ENCODE measurements at regions of chr18 and their contacts with region 1.

Region 1: GRCh38 chr18:74331404-74331803 is 15.8 kb downstream of the C18orf63 start:
- DNase-seq: no peak
- ATAC-seq: peak in 4 of 8 donors; percentile 25 to 70 (median 46)
- H3K4me3 ChIP-seq: no peak overlapping the region
- H3K27ac ChIP-seq: no peak overlapping the region
- H3K4me1 ChIP-seq: peaks cover 0 to 5% (median 0%) of the 10 kb centered on the region in 9 donors
- H3K27me3 ChIP-seq: no peaks in the 10 kb centered on the region
- CTCF ChIP-seq: peak in 8 of 9 donors; percentile 9 to 57 (median 42)

Region 2: DNA sequence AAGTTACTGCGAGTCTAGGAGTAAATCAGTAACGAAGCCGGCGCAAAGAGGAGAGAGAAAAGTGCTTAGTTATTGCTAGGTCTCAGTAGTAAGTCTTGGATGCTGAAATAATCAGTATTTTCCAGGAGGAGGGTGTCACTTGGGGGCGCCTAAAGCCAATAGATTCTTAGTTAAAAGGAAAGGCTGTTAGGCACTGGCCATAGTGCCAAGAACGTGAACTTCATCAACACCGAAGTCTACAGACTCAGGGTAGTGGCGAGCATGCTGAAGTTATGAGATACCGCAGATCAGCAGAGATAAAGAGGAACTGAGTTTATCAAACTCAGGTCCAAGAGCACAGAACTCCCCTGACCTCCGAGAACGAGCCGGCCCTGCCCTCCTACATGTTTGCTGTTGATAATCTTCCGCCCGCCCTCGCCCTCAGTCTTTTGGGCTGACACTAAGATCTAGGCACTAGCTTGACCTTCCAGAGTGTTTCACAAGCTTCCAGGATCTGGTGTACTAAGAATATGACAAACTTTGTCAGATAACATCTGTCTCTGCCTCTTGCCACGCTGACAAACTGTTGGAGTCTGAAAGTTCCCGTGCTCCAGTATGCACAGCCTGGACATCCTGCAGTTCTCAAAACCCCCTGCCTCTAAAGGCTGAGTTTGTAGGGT is 88.8 kb before region 1 on chr18:
- intact Hi-C with region 1: loop called in 1 of 10 experiments (anchors 1 kb)
- DNase-seq: peak in 1 of 2 donors; percentile 27
- ATAC-seq: peak; percentile 64 to 88 (median 80)
- H3K4me3 ChIP-seq: peak overlapping the region in 4 of 10 donors; percentile 0 to 30 (median 14)
- H3K27ac ChIP-seq: no peak overlapping the region
- H3K4me1 ChIP-seq: peaks cover 0 to 5% (median 0%) of the 10 kb centered on the region in 9 donors
- H3K27me3 ChIP-seq: peaks cover 0 to 8% (median 0%) of the 10 kb centered on the region in 7 donors
- CTCF ChIP-seq: peak in 8 of 9 donors; percentile 10 to 63 (median 46)

Region 3: GRCh38 chr18:74378179-74378682 is 46.8 kb after region 1 on chr18:
- intact Hi-C with region 1: no loop called
- DNase-seq: no peak
- ATAC-seq: peak; percentile 17 to 77 (median 59)
- H3K4me3 ChIP-seq: no peak overlapping the region
- H3K27ac ChIP-seq: peak overlapping the region in 3 of 10 donors; percentile 11 to 25 (median 17)
- H3K4me1 ChIP-seq: peaks cover 0 to 14% (median 3%) of the 10 kb centered on the region in 9 donors
- H3K27me3 ChIP-seq: no peaks in the 10 kb centered on the region
- CTCF ChIP-seq: no peak

Region 4: DNA sequence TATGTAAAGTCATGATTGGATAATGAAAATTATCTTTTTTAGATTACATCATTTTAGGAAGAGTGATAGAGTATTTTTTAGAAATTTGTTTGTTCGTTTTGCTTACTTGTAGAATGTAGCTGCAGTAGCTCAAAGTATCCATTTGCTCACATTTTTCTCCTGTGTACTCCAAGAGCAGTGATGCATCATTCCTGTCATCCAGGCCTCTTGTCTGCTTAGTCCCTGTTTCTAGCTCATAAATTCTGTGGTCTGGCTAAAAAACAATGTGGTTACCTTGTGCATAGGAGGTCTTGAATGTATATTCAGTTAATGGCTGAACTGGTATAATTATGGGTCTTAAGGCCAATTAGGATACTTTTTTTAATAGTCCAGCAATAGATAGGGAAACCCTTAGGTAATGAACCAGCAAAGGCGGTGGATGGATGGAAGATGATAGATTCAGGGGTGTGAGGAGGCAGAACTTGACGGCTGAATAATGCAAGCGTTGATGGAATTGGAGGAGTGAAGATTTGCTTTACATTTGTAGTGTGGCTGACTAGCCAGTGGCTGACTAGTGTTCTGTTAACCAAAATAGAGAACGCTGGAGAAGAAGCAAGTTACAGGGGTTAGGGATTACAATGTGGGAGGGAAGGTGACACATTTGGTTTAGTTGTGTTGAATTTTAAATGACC is 411.3 kb after region 1 on chr18:
- intact Hi-C with region 1: no loop called
- DNase-seq: no peak
- ATAC-seq: no peak
- H3K4me3 ChIP-seq: no peak overlapping the region
- H3K27ac ChIP-seq: no peak overlapping the region
- H3K4me1 ChIP-seq: no peaks in the 10 kb centered on the region
- H3K27me3 ChIP-seq: no peaks in the 10 kb centered on the region
- CTCF ChIP-seq: no peak

Measured in heart right ventricle (tissue), 16 donors.